ENCODE measurements at regions of chr6 and their contacts with region 1.

Region 1: GRCh38 chr6:16183187-16183664 is 54.3 kb downstream of the MYLIP start:
- DNase-seq: peak; percentile 61
- CTCF ChIP-seq: peak; percentile 56

Region 2: DNA sequence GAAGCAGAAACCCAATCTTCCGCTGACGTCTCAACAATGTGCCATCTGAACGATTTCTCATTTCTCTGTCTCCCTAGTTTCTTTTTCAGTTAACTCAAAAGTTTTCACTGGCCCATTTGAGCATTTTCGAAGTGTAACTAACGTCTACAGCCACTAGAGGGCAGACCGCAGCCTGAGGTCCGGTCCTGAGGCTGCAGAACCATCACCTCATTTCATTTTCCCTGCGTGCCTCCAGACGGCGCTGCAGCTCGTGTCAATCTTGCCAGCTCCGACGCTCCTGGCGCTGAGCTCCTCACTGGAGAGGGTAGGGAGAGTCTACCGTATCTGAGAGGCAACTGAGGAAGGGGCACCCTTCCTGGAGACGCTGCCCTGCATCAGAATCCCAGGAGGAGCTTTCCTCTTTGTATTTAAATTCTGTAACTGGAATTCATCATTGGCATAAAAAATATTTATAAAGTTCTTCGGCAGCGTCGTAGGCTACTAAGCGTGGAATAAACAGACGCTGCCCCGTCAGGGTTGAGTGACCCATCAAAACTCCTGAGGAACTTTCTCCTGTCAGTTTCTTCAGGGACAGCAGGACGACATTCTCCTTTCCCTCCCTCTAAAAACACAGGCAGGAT is 491.9 kb before region 1 on chr6:
- CTCF ChIA-PET with region 1: interaction called, 126 read pairs
- POLR2A ChIA-PET with region 1: no interaction called
- DNase-seq: peak; percentile 88
- CTCF ChIP-seq: peak; percentile 99

Region 3: GRCh38 chr6:15770347-15771143 is 412.7 kb before region 1 on chr6:
- CTCF ChIA-PET with region 1: interaction called, 17 read pairs
- POLR2A ChIA-PET with region 1: no interaction called
- DNase-seq: peak; percentile 51
- CTCF ChIP-seq: peak; percentile 24

Region 4: GRCh38 chr6:16154904-16155303 is 28.3 kb before region 1 on chr6:
- CTCF ChIA-PET with region 1: interaction called, 14 read pairs
- POLR2A ChIA-PET with region 1: no interaction called
- DNase-seq: no peak
- CTCF ChIP-seq: no peak

Region 5: GRCh38 chr6:16200321-16200883 is 17.2 kb after region 1 on chr6:
- CTCF ChIA-PET with region 1: interaction called, 66 read pairs
- POLR2A ChIA-PET with region 1: interaction called, 4 read pairs
- DNase-seq: no peak
- CTCF ChIP-seq: no peak

Measured in GM10248 (cell line).